ENCODE measurements at regions of chr7 and their contacts with region 1.

Region 1: DNA sequence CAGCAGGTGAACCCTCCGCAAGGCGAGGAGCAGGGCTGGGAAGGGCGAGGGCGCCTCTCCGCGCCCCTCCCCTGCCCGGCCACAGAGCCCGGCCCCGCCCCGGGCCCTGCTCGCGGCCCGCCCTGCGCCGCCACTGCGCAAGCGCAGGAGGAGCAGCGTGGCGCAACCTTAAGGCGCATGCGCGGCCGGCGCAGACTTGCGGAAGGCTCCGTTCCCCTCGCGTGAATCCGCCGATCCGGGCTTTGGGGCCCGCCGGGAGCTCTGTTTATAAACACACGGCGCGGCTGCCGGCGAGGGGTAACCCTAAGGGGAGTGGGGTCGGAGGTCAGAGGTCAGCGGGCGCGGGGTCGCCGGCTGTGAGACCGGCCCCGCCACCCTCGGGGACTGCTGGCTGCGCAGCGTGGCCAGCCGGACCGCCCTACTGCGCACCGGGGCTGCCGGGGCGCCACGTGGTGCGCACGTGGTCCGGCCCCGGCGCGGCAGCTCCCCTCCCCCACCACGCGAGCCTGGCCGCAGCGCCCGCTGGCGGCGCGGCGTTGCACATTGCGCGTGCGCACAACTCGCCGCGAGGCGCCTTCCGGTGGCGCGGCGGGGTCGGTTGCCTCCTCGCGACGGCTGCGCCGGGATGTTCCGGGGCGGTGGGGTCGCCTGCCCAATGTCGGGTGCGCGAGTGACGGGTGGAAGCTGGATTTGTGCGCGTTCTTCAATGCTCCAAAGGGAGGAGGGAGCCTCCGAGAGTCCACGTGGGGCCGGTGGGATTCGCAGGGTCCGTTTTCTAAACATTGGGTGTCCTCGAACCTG is 40.2 kb upstream of the FOXK1 start:
- DNase-seq: peak; percentile 94
- H3K4me3 Mint-ChIP-seq: peak overlapping the region; percentile 89
- H3K27ac Mint-ChIP-seq: peak overlapping the region; percentile 90
- H3K4me1 Mint-ChIP-seq: peaks cover 3% of the 10 kb centered on the region
- H3K27me3 Mint-ChIP-seq: no peaks in the 10 kb centered on the region

Region 2: GRCh38 chr7:4136501-4137110 is 505.3 kb before region 1 on chr7:
- CTCF ChIA-PET with region 1: no interaction called
- intact Hi-C with region 1: no loop called
- DNase-seq: no peak
- H3K4me3 Mint-ChIP-seq: no peak overlapping the region
- H3K27ac Mint-ChIP-seq: no peak overlapping the region
- H3K4me1 Mint-ChIP-seq: no peaks in the 10 kb centered on the region
- H3K27me3 Mint-ChIP-seq: no peaks in the 10 kb centered on the region

Region 3: DNA sequence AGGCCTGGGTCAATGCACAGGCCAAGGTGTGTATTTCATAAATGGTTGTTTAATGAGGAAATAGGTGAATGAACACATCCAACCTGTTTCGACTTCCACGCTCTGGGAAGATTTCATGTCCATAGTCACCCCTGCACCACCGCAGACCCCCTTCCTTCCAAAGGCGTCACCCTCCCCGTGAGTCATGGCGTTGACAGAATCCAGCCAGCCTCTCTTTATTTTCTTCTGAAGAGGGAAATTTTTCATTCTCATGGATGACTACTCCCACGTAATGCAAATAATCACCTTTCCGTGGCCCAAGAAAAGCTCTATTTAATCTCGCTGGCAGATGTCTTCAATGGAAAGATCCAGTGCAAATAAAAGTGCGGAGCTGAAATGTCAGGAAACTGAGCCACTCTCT is 35.1 kb before region 1 on chr7:
- CTCF ChIA-PET with region 1: no interaction called
- intact Hi-C with region 1: no loop called
- DNase-seq: no peak
- H3K4me3 Mint-ChIP-seq: no peak overlapping the region
- H3K27ac Mint-ChIP-seq: no peak overlapping the region
- H3K4me1 Mint-ChIP-seq: no peaks in the 10 kb centered on the region
- H3K27me3 Mint-ChIP-seq: no peaks in the 10 kb centered on the region

Region 4: DNA sequence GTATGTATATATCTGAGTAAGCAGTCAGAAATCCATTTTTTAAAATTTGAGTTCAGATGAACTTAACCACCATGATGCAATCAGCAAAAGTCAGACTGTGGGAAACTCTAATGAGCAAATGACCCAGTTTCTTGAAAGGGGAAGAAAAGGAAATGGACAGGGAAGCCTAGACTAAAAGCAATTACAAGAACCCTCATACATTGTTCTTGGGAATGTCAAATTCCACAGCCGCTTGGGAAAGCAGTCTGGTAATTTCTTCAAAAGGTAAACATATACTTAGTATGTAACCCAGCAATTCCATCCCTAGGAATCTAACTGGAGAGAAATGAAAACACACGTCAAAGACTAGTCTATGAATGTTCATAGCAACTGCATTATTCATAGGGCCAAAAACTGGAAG is 23.8 kb after region 1 on chr7:
- CTCF ChIA-PET with region 1: no interaction called
- intact Hi-C with region 1: no loop called
- DNase-seq: no peak
- H3K4me3 Mint-ChIP-seq: no peak overlapping the region
- H3K27ac Mint-ChIP-seq: no peak overlapping the region
- H3K4me1 Mint-ChIP-seq: no peaks in the 10 kb centered on the region
- H3K27me3 Mint-ChIP-seq: no peaks in the 10 kb centered on the region

Region 5: GRCh38 chr7:4744391-4745264 is 102.8 kb after region 1 on chr7:
- CTCF ChIA-PET with region 1: interaction called, 4 read pairs
- intact Hi-C with region 1: loop called (anchors 1 kb)
- DNase-seq: peak; percentile 77
- H3K4me3 Mint-ChIP-seq: peak overlapping the region; percentile 80
- H3K27ac Mint-ChIP-seq: peak overlapping the region; percentile 95
- H3K4me1 Mint-ChIP-seq: peaks cover 73% of the 10 kb centered on the region
- H3K27me3 Mint-ChIP-seq: no peaks in the 10 kb centered on the region

Region 6: DNA sequence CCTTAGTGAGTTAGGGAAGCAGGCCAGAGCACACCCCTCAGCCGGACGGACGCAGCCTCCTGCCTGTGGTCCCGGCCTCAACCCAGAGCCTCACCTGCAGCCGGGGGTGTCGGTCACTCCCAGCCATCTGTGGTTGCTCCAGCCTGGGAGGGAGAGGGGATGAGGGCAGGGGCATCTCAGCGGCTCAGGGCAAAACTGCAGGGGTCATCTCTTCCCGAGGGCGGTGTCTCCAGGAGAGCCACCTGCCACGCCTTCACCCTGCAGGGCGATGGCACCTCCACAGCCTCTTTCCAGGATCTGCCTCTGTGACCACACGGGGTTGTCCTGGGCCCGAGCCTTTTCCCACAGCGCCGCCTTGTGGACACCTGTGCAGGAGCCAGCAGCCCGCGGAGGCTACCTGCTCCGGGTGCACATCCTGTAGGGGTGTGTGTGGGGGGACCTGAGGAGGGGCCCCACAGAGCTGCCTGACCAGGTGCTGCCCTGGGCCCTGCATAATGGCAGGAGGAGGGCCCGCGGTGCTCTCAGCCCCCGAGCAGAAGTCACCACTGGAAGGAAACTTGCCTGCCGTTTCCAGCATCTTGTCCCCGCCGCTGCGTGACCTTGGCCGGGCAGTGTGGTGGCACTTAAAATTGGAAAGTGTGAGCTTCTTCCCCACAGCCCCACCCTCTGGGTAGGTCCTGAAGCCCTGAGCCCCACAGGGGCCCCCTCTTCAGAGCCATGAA is 112.0 kb after region 1 on chr7:
- CTCF ChIA-PET with region 1: no interaction called
- intact Hi-C with region 1: loop called (anchors 1 kb)
- DNase-seq: peak; percentile 93
- H3K4me3 Mint-ChIP-seq: no peak overlapping the region
- H3K27ac Mint-ChIP-seq: no peak overlapping the region
- H3K4me1 Mint-ChIP-seq: peaks cover 21% of the 10 kb centered on the region
- H3K27me3 Mint-ChIP-seq: no peaks in the 10 kb centered on the region

Region 7: GRCh38 chr7:4775250-4775847 is 133.5 kb after region 1 on chr7 and contains the start of gene AP5Z1:
- CTCF ChIA-PET with region 1: interaction called, 7 read pairs
- intact Hi-C with region 1: loop called (anchors 1 kb)
- DNase-seq: peak; percentile 94
- H3K4me3 Mint-ChIP-seq: peak within 1 kb of the TSS; percentile 98
- H3K27ac Mint-ChIP-seq: peak within 1 kb of the TSS; percentile 93
- H3K4me1 Mint-ChIP-seq: peaks cover 40% of the 10 kb centered on the region
- H3K27me3 Mint-ChIP-seq: no peaks in the 10 kb centered on the region
- total RNA-seq, gene AP5Z1: 15.3 to 18.1 TPM